Uterus (tissue), 4 donors: ENCODE measurements at regions of chr4 and their contacts with region 1.

Region 1: GRCh38 chr4:2220016-2220630 is 21.8 kb downstream of the HAUS3 start:
- DNase-seq: peak; percentile 66
- H3K4me3 ChIP-seq: no peak overlapping the region
- H3K27ac ChIP-seq: no peak overlapping the region
- H3K4me1 ChIP-seq: no peaks in the 10 kb centered on the region
- H3K27me3 ChIP-seq: no peaks in the 10 kb centered on the region
- CTCF ChIP-seq: peak; percentile 73 to 90 (median 86)
- POLR2A ChIP-seq: no peak

Region 2: GRCh38 chr4:2468445-2469192 is 248.5 kb after region 1 on chr4 and contains the start of gene RNF4:
- intact Hi-C with region 1: loop called (anchors 10 kb)
- DNase-seq: peak; percentile 96
- H3K4me3 ChIP-seq: peak within 1 kb of the TSS; percentile 60 to 99
- H3K27ac ChIP-seq: peak within 1 kb of the TSS; percentile 80 to 92
- H3K4me1 ChIP-seq: peaks cover 0 to 8% of the 10 kb centered on the region in 2 donors
- H3K27me3 ChIP-seq: no peaks in the 10 kb centered on the region
- CTCF ChIP-seq: peak in 1 of 4 experiments; percentile 3
- POLR2A ChIP-seq: peak; percentile 30 to 60
- total RNA-seq, gene RNF4: 10.8 to 57.9 (median 33.9) TPM